ENCODE measurements at regions of chr3 and their contacts with region 1.

Region 1: GRCh38 chr3:185176750-185177359 is 24.0 kb upstream of the C3orf70 start:
- DNase-seq: peak in 1 of 2 donors; percentile 75
- H3K4me3 ChIP-seq: no peak overlapping the region
- H3K27ac ChIP-seq: no peak overlapping the region
- H3K4me1 ChIP-seq: peaks cover 0 to 21% (median 8%) of the 10 kb centered on the region in 4 donors
- H3K27me3 ChIP-seq: peaks cover 0 to 3% (median 0%) of the 10 kb centered on the region in 3 donors
- CTCF ChIP-seq: peak in 5 of 7 experiments; percentile 39 to 56 (median 47)
- EP300 ChIP-seq: no peak
- POLR2A ChIP-seq: no peak

Region 2: DNA sequence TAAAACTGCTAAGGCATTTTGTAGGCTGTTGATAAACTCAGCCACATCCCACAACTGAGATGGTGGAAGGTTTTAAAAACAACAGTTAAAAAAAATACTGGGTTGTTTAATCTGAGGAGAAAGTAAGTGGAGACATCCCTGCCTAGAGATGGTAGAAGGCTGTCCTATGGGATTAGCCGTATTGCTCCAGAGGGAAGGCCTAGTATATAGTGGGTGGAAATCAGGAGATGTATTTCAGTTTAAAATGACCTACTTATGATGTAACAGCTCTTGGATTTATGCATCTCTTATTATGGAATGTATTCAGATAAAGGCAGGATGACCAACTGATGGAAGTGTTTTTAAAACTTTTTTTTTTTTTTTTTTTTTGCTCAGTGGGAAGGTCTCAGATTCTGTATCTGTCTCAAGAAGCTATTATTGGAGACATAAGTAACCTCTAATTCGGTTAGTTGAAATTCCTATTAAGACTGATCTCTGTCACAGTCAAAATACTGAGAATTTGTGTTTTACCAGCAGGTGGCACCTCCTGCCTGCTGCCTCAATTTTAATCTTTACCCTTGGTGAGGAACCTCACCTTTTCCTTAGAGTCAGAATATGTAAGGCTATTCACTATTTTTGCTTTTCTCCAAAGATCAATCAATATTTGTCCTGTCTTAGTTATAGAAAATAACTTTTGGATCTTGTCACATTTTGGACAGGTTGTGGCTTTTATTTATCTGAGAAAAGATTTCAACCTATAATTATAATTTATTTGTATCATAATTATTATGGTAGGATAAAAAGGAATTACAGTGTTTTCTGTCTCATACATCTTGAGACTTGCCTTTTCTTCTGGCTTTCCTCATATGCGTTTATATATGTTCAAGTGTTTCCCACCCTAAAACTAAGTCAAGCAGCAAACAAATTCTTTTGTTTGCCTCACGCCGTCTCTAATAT is 301.9 kb before region 1 on chr3:
- intact Hi-C with region 1: loop called (anchors 10 kb)
- DNase-seq: peak in 1 of 2 donors; percentile 67
- H3K4me3 ChIP-seq: no peak overlapping the region
- H3K27ac ChIP-seq: no peak overlapping the region
- H3K4me1 ChIP-seq: no peaks in the 10 kb centered on the region
- H3K27me3 ChIP-seq: no peaks in the 10 kb centered on the region
- CTCF ChIP-seq: peak in 4 of 7 experiments; percentile 16 to 30 (median 20)
- EP300 ChIP-seq: no peak
- POLR2A ChIP-seq: no peak

Region 3: GRCh38 chr3:185912929-185913901 is 736.4 kb after region 1 on chr3:
- intact Hi-C with region 1: no loop called
- DNase-seq: no peak
- H3K4me3 ChIP-seq: no peak overlapping the region
- H3K27ac ChIP-seq: no peak overlapping the region
- H3K4me1 ChIP-seq: peaks cover 0 to 6% (median 0%) of the 10 kb centered on the region in 4 donors
- H3K27me3 ChIP-seq: no peaks in the 10 kb centered on the region
- CTCF ChIP-seq: no peak
- EP300 ChIP-seq: no peak
- POLR2A ChIP-seq: no peak

Measured in stomach (tissue), 19 donors.